ENCODE measurements at regions of chr20 and their contacts with region 1.

Region 1: DNA sequence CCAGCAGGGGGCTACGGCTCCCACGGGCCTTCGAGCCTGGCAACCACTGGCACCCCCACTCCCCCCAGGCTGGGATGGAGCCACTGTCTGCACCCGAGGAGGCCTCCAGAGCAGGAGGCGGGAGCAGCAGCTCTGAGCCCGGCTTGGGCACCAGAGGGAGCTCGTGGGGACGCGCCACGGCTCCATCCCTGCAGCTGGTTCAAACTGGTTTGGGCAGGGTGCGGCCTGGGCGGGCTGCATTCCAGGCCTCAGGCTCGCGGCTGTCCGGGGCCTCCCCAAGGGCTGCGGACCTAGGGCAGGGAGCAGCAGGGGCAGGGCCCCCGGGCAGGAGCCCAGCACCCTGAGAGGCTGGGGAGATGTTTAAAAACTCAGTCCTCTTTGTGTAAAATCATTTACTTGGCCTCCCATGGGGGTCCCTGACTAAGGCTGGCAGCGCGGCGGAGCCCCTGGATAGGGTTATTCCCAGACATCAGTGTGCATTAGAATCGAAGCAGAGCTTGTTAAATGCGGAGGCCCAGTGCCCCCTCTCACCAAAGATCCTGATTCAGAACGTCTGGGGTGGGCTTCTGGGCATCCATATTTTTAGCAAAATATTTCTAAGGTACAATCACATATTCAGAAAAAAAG is 4.1 kb upstream of the BCAS4 start:
- DNase-seq: peak; percentile 83
- H3K4me3 ChIP-seq: no peak overlapping the region
- H3K27ac ChIP-seq: peak overlapping the region; percentile 83
- H3K4me1 ChIP-seq: peaks cover 14% of the 10 kb centered on the region
- H3K27me3 ChIP-seq: no peaks in the 10 kb centered on the region
- CTCF ChIP-seq: peak; percentile 73 to 92

Region 2: DNA sequence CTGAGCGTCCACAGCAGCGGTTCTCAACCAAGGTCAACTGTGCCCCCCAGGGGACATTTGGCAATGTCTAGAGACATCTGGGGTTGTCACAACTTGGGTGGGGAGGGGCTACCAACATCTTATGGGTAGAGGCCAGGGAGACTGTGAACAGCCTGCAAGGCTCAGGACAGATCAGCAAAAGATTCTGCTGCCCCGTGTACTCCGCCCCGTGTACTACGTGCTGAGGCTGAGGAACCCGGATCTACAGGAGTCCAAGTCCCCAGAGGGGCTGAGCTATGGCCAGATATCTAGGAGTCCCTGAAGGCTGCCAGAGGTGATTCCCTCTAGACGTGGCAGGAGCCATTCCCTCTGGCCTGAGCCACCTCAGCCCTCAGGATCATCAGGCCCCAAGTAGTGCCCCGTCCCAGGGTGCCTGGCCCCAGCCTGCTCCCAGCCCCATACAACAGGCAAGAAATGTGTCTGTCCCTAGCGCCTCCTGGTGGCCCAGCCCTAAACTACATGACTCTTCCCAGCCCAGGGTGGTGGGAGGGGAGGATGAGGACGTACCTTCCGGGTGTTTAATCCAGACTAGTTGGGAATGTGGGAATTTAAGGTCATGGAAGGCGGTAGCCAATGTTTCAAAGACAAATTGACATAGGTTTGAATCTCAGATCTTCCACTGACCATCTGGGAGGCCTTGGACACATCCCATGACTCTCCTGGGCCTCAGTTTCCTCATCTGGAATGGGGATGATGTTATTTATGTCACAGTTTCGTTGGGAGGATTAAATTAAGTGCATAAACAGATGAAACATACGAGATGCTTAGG is 330.1 kb before region 1 on chr20:
- CTCF ChIA-PET with region 1: no interaction called
- dilution Hi-C with region 1: no loop called
- in situ Hi-C with region 1: no loop called
- intact Hi-C with region 1: loop called (anchors 5 kb)
- DNase-seq: peak; percentile 73
- H3K4me3 ChIP-seq: no peak overlapping the region
- H3K27ac ChIP-seq: no peak overlapping the region
- H3K4me1 ChIP-seq: peaks cover 18% of the 10 kb centered on the region
- H3K27me3 ChIP-seq: no peaks in the 10 kb centered on the region
- CTCF ChIP-seq: peak; percentile 95

Region 3: GRCh38 chr20:50632236-50632635 is 158.5 kb before region 1 on chr20:
- CTCF ChIA-PET with region 1: interaction called, 26 read pairs
- dilution Hi-C with region 1: no loop called
- in situ Hi-C with region 1: no loop called
- intact Hi-C with region 1: no loop called
- DNase-seq: no peak
- H3K4me3 ChIP-seq: no peak overlapping the region
- H3K27ac ChIP-seq: no peak overlapping the region
- H3K4me1 ChIP-seq: peaks cover 11% of the 10 kb centered on the region
- H3K27me3 ChIP-seq: no peaks in the 10 kb centered on the region
- CTCF ChIP-seq: no peak

Region 4: DNA sequence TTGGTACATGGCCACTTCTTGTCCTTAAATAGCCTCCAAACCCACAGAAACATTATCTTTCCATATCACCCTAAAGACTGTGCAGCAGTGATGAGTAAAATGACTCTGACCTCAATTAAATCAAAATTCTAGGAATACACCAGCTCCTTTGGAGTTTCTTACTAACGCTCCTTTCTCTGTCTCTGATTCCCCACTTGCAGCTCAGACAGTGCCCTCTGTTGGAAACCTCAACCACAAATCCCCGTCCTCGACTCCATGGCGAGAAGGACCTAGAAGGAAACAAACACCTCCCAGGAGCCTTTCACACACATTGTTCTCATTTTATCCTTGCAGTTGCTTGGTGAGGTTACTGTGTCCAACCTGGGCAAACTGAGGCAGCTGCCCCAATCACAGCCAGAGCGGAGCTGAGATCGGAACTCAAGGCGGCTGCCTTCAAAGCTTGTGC is 77.1 kb before region 1 on chr20:
- CTCF ChIA-PET with region 1: no interaction called
- dilution Hi-C with region 1: no loop called
- in situ Hi-C with region 1: no loop called
- intact Hi-C with region 1: no loop called
- DNase-seq: no peak
- H3K4me3 ChIP-seq: no peak overlapping the region
- H3K27ac ChIP-seq: no peak overlapping the region
- H3K4me1 ChIP-seq: peaks cover 3% of the 10 kb centered on the region
- H3K27me3 ChIP-seq: no peaks in the 10 kb centered on the region
- CTCF ChIP-seq: peak; percentile 13 to 54

Region 5: DNA sequence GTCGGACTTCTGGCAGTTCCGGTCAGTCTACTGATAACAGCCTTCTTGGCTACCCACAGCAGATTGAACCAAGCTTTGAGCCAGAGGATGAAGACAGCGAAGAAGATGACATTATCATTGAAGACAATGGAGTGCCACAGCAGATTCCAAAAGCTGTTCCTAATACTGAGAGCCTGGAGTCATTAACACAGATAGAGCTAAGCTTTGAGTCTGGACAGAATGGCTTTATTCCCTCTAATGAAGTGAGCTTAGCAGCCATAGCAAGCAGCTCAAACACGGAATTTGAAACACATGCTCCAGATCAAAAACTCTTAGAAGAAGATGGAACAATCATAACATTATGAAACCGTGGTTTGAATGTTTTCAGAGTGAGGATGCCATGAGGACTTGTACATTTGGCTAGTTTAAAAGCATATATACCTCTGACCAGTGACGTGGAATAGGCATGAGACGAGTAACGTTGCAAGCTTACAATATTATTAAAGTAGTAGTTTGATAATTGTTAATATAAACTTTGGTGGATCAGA is 40.6 kb before region 1 on chr20:
- CTCF ChIA-PET with region 1: interaction called, 13 read pairs
- dilution Hi-C with region 1: no loop called
- in situ Hi-C with region 1: no loop called
- intact Hi-C with region 1: loop called (anchors 1 kb)
- DNase-seq: no peak
- H3K4me3 ChIP-seq: no peak overlapping the region
- H3K27ac ChIP-seq: no peak overlapping the region
- H3K4me1 ChIP-seq: peaks cover 29% of the 10 kb centered on the region
- H3K27me3 ChIP-seq: no peaks in the 10 kb centered on the region
- CTCF ChIP-seq: no peak

Region 6: DNA sequence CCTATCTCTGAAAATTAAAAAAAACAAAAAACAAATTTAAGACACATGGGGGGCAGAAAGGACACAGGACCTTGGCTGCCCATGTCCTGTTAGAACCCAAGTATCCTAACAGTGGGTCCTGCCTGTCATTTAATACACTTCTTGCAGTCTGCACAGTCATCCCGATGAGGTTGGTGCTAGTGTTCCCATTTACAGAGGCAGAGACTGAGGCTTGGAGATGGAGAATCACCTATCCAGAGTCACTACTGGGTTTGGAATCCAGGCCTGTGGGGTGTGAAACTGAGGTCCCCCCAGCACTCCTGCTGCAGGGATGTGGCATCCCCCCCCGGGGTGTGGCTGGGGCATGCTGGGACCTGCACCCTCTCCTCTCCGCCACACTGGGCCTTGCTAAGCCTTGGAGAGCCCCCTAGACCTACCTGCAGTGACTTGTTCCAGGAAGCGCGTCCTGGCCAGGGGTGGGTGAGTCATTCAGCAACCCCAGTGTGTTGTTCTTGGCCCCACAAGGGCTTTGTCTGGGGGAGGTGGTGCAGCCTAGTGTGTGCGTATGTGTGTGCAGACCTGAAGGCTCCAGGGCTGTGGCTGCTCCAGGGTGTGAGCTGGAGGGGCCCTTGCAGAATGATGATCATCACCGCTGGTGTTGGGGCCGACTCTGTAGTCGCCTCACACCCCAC is 53.8 kb after region 1 on chr20:
- CTCF ChIA-PET with region 1: interaction called, 10 read pairs
- dilution Hi-C with region 1: no loop called
- in situ Hi-C with region 1: no loop called
- intact Hi-C with region 1: no loop called
- DNase-seq: peak; percentile 99
- H3K4me3 ChIP-seq: no peak overlapping the region
- H3K27ac ChIP-seq: peak overlapping the region; percentile 77
- H3K4me1 ChIP-seq: peaks cover 54% of the 10 kb centered on the region
- H3K27me3 ChIP-seq: no peaks in the 10 kb centered on the region
- CTCF ChIP-seq: no peak

Region 7: GRCh38 chr20:50980851-50981713 is 190.3 kb after region 1 on chr20:
- CTCF ChIA-PET with region 1: no interaction called
- dilution Hi-C with region 1: no loop called
- in situ Hi-C with region 1: no loop called
- intact Hi-C with region 1: loop called (anchors 1 kb)
- DNase-seq: peak; percentile 52
- H3K4me3 ChIP-seq: no peak overlapping the region
- H3K27ac ChIP-seq: peak overlapping the region; percentile 84
- H3K4me1 ChIP-seq: peaks cover 34% of the 10 kb centered on the region
- H3K27me3 ChIP-seq: no peaks in the 10 kb centered on the region
- CTCF ChIP-seq: peak; percentile 70 to 91

Region 8: GRCh38 chr20:51595058-51595532 is 804.3 kb after region 1 on chr20:
- CTCF ChIA-PET with region 1: interaction called, 5 read pairs
- dilution Hi-C with region 1: no loop called
- in situ Hi-C with region 1: no loop called
- intact Hi-C with region 1: loop called (anchors 10 kb)
- DNase-seq: peak; percentile 64
- H3K4me3 ChIP-seq: no peak overlapping the region
- H3K27ac ChIP-seq: no peak overlapping the region
- H3K4me1 ChIP-seq: no peaks in the 10 kb centered on the region
- H3K27me3 ChIP-seq: no peaks in the 10 kb centered on the region
- CTCF ChIP-seq: peak; percentile 90 to 94

Measured in mammary epithelial cell (primary cell).